Aorta (tissue), 5 donors: ENCODE measurements at regions of chr14 and their contacts with region 1.

Region 1: GRCh38 chr14:50231475-50232275 is at the start of gene SOS2:
- DNase-seq: peak; percentile 92 to 95
- ATAC-seq: peak; percentile 96
- H3K4me3 ChIP-seq: peak within 1 kb of the TSS; percentile 70 to 99
- H3K27ac ChIP-seq: peak within 1 kb of the TSS; percentile 84 to 100
- H3K4me1 ChIP-seq: peaks cover 0 to 3% of the 10 kb centered on the region in 2 donors
- H3K27me3 ChIP-seq: no peaks in the 10 kb centered on the region
- total RNA-seq, gene SOS2: 37.0 to 41.7 TPM

Region 2: DNA sequence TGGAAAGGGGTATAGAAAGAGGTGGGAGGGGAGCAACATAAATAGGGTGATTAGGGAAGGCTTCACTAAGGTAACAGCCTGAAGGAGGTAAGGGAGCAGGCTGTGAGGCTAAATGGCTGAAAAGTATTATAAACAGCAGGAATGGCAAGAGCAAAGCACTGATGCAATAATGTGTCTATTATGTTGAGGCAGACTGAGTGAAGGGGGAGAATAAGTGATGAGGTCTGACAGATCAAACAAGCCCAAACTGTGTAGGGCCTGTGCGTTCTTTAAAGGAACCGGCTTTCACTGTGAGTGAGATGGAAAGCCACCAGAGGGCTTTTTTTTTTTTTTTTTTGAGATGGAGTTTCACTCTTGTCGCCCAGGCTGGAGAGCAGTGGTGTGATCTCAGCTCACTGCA is 108.6 kb before region 1 on chr14:
- intact Hi-C with region 1: loop called in 1 of 2 experiments (anchors 10 kb)
- DNase-seq: no peak
- ATAC-seq: no peak
- H3K4me3 ChIP-seq: no peak overlapping the region
- H3K27ac ChIP-seq: no peak overlapping the region
- H3K4me1 ChIP-seq: no peaks in the 10 kb centered on the region
- H3K27me3 ChIP-seq: no peaks in the 10 kb centered on the region

Region 3: GRCh38 chr14:50311975-50312733 is 80.5 kb after region 1 on chr14 and contains the starts of genes DMAC2L and L2HGDH:
- intact Hi-C with region 1: loop called in 1 of 2 experiments (anchors 5 kb)
- DNase-seq: peak; percentile 95 to 98
- ATAC-seq: peak; percentile 100
- H3K4me3 ChIP-seq: peak within 1 kb of the TSS; percentile 54 to 76
- H3K27ac ChIP-seq: peak within 1 kb of the TSS in 1 of 2 donors; percentile 53
- H3K4me1 ChIP-seq: no peaks in the 10 kb centered on the region
- H3K27me3 ChIP-seq: no peaks in the 10 kb centered on the region
- total RNA-seq, gene DMAC2L: 13.1 to 15.8 TPM
- total RNA-seq, gene L2HGDH: 2.1 to 2.7 TPM